MCF 10A (cell line): ENCODE measurements at regions of chr6 and their contacts with region 1.

Region 1: DNA sequence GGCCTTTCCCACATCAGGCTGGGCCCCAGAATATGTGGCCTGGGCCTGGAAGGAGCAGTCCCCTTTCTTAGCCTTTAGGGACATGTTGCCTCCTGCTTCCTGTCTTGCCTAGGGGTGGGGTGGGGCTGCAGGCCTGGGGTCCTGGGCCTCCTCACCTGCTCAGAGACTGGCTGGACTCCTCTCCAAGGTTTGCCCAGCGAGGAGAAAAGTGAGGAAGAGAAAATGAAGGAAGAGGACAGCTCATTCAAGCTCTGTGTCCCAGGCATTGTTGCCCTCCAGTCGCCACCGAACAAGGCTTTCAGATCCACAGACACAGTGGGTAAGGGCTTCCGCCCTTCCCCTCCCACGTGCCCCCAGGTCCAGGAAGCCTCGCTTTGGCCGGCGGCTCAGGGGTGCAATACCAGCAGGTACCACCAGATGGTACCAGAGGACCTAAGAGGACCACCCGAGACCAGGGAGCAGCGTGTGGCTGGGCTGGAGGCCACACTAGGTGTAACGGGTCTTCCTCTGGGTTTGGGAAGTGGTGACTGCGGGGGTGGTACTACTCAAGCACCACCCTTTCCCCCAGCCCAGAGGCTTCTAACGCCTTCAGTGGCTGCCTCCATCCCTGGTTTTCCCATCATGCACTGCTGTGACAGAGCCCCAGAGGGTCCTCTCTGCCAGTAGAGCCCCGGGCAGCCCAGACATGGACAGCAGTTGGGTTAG is 5.5 kb upstream of the BAK1 start:
- DNase-seq: peak; percentile 77
- H3K4me3 Mint-ChIP-seq: no peak overlapping the region
- H3K27ac Mint-ChIP-seq: no peak overlapping the region
- H3K4me1 Mint-ChIP-seq: peaks cover 8% of the 10 kb centered on the region
- H3K27me3 Mint-ChIP-seq: no peaks in the 10 kb centered on the region
- CTCF ChIP-seq: peak; percentile 97

Region 2: DNA sequence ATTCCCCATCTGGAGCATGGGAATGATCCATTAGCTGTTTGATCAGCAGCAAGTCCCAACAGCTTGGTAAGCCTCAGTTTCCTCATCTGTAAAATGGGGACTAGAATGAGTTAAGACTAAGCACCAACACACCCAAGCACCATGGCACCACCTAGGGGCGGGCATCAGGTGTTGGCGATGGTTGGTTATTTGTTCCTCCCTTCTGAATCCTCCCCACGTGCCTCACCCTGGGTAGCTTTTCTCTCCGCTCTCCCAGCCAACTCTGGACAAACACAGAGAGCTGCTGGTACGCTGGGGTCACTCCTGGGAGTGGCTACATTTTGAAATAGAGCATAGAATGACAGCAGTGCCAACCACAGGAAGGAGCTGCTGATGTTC is 22.2 kb after region 1 on chr6:
- CTCF ChIA-PET with region 1: interaction called, 19 read pairs
- POLR2A ChIA-PET with region 1: no interaction called
- intact Hi-C with region 1: no loop called
- DNase-seq: peak; percentile 71
- H3K4me3 Mint-ChIP-seq: no peak overlapping the region
- H3K27ac Mint-ChIP-seq: no peak overlapping the region
- H3K4me1 Mint-ChIP-seq: peaks cover 21% of the 10 kb centered on the region
- H3K27me3 Mint-ChIP-seq: no peaks in the 10 kb centered on the region
- CTCF ChIP-seq: peak; percentile 42

Region 3: DNA sequence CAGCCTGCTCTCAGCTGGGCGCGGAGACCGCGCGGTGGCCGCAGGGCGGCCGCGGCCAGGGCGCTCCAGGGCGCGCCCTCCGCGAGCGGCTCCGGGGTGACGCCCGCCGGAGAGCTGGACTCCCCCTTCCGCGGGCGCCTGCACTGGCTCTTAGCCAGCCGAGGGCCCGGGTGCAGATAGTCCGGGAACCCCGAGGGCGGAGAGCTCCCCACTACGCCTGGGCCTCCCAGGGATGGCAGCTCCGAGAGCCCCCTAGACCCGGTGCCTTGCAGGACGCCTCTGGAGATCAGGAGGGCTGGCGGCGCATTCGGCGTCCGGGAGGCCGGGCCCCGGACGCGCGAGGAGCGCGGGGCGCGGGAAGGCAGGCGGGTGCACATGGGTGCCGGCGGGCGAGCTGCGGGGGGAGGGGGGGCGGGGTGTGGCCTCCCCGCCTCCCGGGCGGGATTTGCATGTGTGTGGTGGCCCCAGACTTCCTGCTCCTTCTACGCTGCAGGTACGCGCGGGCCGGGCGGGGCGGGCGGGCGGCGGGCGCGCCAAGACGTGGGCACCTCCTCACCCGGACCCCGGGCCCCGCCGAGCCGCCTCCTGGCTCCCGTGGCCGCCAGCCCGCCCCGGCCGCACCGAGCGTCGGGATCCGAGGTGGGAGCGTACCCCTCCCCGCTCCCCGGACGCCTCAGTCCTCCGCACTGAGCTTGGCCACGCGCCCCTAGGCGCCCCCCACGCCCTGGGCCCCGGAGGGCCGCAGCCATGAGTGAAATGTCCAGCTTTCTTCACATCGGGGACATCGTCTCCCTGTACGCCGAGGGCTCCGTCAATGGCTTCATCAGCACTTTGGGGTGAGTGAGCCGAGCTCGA is 35.5 kb after region 1 on chr6 and contains the start of gene ITPR3:
- CTCF ChIA-PET with region 1: interaction called, 26 read pairs
- POLR2A ChIA-PET with region 1: interaction called, 21 read pairs
- intact Hi-C with region 1: loop called (anchors 1 kb)
- DNase-seq: peak; percentile 81
- H3K4me3 Mint-ChIP-seq: peak within 1 kb of the TSS; percentile 86
- H3K27ac Mint-ChIP-seq: peak within 1 kb of the TSS; percentile 95
- H3K4me1 Mint-ChIP-seq: peaks cover 42% of the 10 kb centered on the region
- H3K27me3 Mint-ChIP-seq: no peaks in the 10 kb centered on the region
- CTCF ChIP-seq: no peak
- total RNA-seq, gene ITPR3: 86.9 and 109 TPM in 2 replicates

Region 4: GRCh38 chr6:33665957-33666356 is 80.4 kb after region 1 on chr6:
- CTCF ChIA-PET with region 1: interaction called, 30 read pairs
- POLR2A ChIA-PET with region 1: interaction called, 10 read pairs
- intact Hi-C with region 1: no loop called
- DNase-seq: no peak
- H3K4me3 Mint-ChIP-seq: no peak overlapping the region
- H3K27ac Mint-ChIP-seq: no peak overlapping the region
- H3K4me1 Mint-ChIP-seq: peaks cover 10% of the 10 kb centered on the region
- H3K27me3 Mint-ChIP-seq: no peaks in the 10 kb centered on the region
- CTCF ChIP-seq: no peak

Region 5: GRCh38 chr6:33694401-33694931 is 108.9 kb after region 1 on chr6:
- CTCF ChIA-PET with region 1: interaction called, 15 read pairs
- POLR2A ChIA-PET with region 1: interaction called, 5 read pairs
- intact Hi-C with region 1: no loop called
- DNase-seq: peak; percentile 71
- H3K4me3 Mint-ChIP-seq: no peak overlapping the region
- H3K27ac Mint-ChIP-seq: peak overlapping the region; percentile 70
- H3K4me1 Mint-ChIP-seq: peaks cover 8% of the 10 kb centered on the region
- H3K27me3 Mint-ChIP-seq: no peaks in the 10 kb centered on the region
- CTCF ChIP-seq: no peak

Region 6: DNA sequence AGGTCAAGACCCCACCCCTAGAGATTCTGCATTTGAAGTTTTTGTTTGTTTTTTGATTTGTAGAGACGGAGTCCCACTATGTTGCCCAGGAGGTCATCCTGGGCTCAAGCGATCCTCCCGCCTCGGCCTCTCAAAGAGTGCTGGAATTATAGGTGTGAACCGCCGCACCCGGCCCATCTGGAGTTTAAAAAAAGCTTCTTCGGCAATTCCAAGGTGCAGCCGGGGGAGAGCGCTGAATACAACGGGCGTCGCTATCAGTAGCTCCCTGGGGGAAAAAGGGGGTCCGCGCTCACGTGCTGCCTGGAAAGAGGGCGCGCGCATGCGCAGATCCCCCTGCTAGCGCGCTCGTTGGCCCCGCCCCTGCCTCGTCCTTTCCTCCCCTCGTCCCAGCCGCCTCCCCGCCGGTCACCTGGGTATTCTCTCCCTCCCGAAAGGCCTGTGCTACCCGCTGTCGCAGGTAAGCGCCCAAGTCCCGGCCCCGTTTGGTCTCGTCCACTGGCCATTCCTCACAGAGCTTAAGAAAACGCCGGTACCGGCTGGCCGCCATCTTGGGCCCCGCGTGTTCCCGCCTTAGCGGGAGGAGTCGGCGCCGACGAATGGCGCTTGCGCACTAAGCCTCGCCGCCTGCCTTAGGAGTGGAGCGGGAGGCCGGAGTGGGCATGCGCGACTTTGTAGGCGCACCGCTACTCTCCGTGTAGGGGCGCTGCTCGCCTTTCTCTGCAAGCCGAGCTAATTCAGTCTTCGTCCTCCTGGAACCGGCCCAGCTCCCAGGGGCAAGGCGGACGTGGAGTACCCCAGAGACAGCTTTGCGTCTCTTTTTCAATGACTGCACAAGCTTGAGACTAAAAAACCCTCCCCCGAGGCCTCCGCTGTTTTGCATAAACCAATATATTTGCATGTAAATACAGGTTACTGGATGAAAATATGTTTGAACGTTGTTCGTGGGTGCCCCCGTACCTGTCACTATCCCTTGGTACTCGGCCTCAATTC is 125.9 kb after region 1 on chr6 and contains the start of gene UQCC2:
- CTCF ChIA-PET with region 1: interaction called, 15 read pairs
- POLR2A ChIA-PET with region 1: interaction called, 4 read pairs
- intact Hi-C with region 1: no loop called
- DNase-seq: peak; percentile 97
- H3K4me3 Mint-ChIP-seq: peak within 1 kb of the TSS; percentile 99
- H3K27ac Mint-ChIP-seq: peak within 1 kb of the TSS; percentile 84
- H3K4me1 Mint-ChIP-seq: peaks cover 24% of the 10 kb centered on the region
- H3K27me3 Mint-ChIP-seq: no peaks in the 10 kb centered on the region
- CTCF ChIP-seq: peak; percentile 61
- total RNA-seq, gene UQCC2: 122 and 147 TPM in 2 replicates

Region 7: GRCh38 chr6:34154668-34155447 is 569.3 kb after region 1 on chr6:
- CTCF ChIA-PET with region 1: interaction called, 5 read pairs
- POLR2A ChIA-PET with region 1: no interaction called
- intact Hi-C with region 1: loop called (anchors 5 kb)
- DNase-seq: peak; percentile 43
- H3K4me3 Mint-ChIP-seq: peak overlapping the region; percentile 46
- H3K27ac Mint-ChIP-seq: no peak overlapping the region
- H3K4me1 Mint-ChIP-seq: no peaks in the 10 kb centered on the region
- H3K27me3 Mint-ChIP-seq: peaks cover 63% of the 10 kb centered on the region
- CTCF ChIP-seq: peak; percentile 99

Region 8: DNA sequence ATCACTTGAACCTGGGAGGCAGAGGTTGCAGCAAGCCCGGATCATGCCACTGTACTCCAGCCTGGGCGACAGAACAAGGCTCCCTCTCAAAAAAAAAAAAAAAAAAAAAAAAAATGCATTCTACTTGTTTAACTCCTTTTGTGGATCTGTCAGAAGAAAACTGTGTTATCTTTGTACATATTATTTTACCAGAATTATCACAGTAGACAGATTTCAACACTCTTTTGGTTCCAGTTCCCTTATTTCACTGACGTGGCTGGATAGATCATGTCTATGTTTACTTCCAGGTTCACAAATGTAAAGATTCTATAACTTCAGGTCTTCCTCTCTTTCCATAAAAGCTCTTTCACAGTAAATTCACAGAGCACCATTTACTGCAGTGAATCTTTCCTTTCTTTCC is 788.5 kb after region 1 on chr6:
- CTCF ChIA-PET with region 1: no interaction called
- POLR2A ChIA-PET with region 1: no interaction called
- intact Hi-C with region 1: no loop called
- DNase-seq: no peak
- H3K4me3 Mint-ChIP-seq: no peak overlapping the region
- H3K27ac Mint-ChIP-seq: no peak overlapping the region
- H3K4me1 Mint-ChIP-seq: peaks cover 6% of the 10 kb centered on the region
- H3K27me3 Mint-ChIP-seq: no peaks in the 10 kb centered on the region
- CTCF ChIP-seq: no peak